ENCODE measurements at regions of chr19 and their contacts with region 1.

Region 1: DNA sequence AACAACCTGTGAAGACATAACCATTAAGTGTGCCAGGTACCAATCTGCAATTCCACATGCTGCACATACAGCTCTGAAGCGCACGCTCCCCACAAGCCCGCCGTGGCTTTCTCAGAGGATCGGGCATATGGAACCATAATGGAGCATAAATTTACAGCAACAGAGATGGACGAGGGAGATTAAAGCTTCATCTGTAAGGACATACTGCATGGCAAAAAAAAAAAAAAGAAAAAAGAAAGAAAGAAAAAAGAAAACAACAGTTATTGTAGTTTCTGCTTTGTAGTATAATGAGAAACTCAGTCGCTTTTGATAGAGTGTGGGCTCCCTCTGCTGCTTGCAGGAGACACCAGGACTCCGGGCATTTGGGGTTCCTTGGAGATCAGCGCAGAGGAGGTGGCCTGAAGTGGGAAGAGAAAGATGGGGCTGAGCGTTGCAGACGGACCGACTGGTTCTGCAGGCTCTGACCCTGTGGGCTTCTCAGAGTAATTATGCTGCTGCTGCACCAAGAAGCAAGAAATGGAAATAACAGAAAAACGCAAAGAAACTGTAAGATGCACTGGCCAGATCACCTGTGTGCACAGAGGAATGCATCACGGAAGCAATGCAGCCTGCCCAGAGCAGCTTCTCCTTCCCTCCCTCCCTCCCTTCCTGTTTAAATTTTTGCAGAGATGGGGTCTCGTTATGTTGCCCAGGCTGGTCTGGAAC is 10.8 kb upstream of the PDCD5 start:
- ATAC-seq: peak; percentile 72 to 95 (median 84)
- H3K4me3 ChIP-seq: no peak overlapping the region
- H3K27ac ChIP-seq: no peak overlapping the region
- H3K4me1 ChIP-seq: no peaks in the 10 kb centered on the region

Region 2: GRCh38 chr19:32238076-32238475 is 332.2 kb before region 1 on chr19:
- in situ Hi-C with region 1: no loop called
- ATAC-seq: no peak
- H3K4me3 ChIP-seq: no peak overlapping the region
- H3K27ac ChIP-seq: no peak overlapping the region
- H3K4me1 ChIP-seq: peaks cover 0 to 42% of the 10 kb centered on the region in 2 donors

Region 3: DNA sequence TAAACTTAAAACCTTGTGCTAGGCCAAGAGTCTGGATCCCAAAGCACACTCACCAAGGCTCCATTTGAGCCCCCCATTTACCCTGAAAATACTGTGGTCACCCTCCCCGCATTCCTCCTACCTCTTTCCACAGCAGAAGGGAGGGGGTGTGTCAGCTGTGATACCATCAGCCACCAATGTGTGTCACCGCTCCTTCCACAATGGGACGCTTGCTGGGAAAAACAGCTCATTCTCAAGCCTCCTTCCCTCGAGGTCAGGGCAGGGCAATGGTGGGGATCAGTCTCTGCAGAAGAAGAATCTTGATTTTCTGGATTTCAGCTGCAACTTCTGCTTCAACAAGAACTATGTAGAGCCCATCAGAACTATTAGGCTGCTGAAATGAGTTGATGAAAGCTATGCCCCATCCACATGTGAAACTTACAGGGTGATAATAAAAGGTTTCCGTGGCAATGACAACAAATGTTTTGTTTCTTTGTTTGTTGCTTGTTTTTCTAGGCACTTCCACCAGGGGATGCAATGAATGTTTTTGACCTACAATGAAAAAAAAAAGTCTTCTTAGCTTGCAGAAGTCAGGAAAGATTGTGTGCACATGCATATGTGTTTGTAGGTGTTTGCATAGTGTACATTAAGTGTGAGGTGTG is 251.2 kb before region 1 on chr19:
- in situ Hi-C with region 1: loop called in 1 of 9 experiments (anchors 25 kb)
- ATAC-seq: peak; percentile 28 to 83 (median 70)
- H3K4me3 ChIP-seq: no peak overlapping the region
- H3K27ac ChIP-seq: no peak overlapping the region
- H3K4me1 ChIP-seq: peaks cover 30 to 38% of the 10 kb centered on the region in 2 donors

Region 4: GRCh38 chr19:32345261-32346207 is 224.7 kb before region 1 on chr19 and contains the start of gene ZNF507:
- in situ Hi-C with region 1: loop called in 1 of 9 experiments (anchors 25 kb)
- ATAC-seq: peak; percentile 81 to 91 (median 86)
- H3K4me3 ChIP-seq: peak within 1 kb of the TSS; percentile 67 to 93 (median 72)
- H3K27ac ChIP-seq: peak within 1 kb of the TSS; percentile 72 to 91
- H3K4me1 ChIP-seq: peaks cover 7 to 27% of the 10 kb centered on the region in 2 donors
- total RNA-seq, gene ZNF507: 7.9 to 31.6 (median 13.0) TPM

Region 5: GRCh38 chr19:32464279-32464678 is 106.0 kb before region 1 on chr19:
- in situ Hi-C with region 1: loop called in 1 of 9 experiments (anchors 10 kb)
- ATAC-seq: peak in 1 of 8 experiments; percentile 47
- H3K4me3 ChIP-seq: no peak overlapping the region
- H3K27ac ChIP-seq: no peak overlapping the region
- H3K4me1 ChIP-seq: no peaks in the 10 kb centered on the region